ENCODE measurements at regions of chr19 and their contacts with region 1.

Region 1: DNA sequence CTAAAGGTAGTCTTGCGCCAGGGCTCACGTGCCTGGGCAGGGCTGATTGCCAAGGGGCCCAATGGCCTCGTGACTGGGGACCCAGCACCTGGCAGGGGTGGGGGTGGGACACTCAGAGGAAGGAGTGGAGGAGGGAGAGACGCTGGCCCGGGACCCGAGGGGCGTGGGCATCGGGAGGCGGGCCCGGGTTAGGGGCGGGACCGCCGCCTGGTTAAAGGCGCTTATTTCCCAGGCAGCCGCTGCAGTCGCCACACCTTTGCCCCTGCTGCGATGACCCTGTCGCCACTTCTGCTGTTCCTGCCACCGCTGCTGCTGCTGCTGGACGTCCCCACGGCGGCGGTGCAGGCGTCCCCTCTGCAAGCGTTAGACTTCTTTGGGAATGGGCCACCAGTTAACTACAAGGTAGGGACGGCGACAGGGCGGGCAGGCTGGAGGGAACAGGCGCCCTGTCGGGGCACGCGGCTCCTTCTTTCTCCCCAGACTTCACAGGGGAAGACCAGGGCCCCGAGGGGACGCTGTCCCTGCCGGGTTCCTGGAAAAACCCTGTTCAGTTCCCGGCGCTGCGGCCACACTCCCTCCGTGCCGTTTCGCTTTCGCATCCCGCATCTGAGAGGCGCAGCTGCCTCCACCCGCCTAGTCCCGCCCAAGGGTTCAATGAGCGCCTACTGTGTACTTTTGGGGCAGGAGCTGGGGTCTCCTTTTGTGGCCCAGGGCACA is at the start of gene IFI30:
- DNase-seq: peak; percentile 63 to 84
- H3K4me3 ChIP-seq: peak within 1 kb of the TSS; percentile 66
- H3K27ac ChIP-seq: peak within 1 kb of the TSS; percentile 11; the same call in 1 of the 2 replicates
- H3K4me1 ChIP-seq: peaks cover 15% of the 10 kb centered on the region
- H3K27me3 ChIP-seq: no peaks in the 10 kb centered on the region
- CTCF ChIP-seq: no peak
- total RNA-seq, gene IFI30: 26.1 and 35.8 TPM in 2 replicates

Region 2: DNA sequence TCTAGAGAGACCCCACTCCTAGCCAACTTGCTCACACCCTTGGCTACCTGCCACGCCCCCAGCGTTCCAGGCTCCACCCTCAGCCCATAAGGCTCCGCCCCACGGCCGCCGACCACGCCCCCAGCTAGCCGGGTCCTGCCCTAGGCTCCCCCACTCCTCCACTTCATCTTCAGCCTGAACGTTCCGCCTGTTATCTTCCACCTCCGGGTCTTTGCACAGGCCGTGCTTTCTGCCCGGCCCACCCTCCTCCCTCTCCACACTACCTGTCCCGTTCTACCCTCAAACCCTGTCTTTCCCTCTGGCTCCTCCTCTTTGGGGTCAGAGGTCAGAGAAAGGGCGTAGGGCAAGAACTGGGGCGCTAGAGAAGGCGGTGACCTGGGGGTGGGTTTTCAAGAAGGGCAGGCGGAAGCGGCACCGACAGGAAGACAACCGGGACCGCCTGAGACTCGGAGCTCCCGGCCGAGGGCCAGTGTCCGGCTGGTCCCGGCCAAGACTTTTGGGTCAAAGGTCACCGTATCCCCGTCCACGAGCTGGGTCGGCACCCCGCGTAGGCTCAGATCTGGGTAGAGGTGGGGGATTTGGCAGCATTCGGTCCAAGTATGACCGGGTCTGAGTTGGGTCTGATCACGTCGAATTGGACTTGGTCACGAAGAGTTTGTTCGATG is 50.3 kb after region 1 on chr19:
- CTCF ChIA-PET with region 1: no interaction called
- POLR2A ChIA-PET with region 1: no interaction called
- intact Hi-C with region 1: no loop called
- DNase-seq: peak; percentile 47 to 73
- H3K4me3 ChIP-seq: peak overlapping the region; percentile 63
- H3K27ac ChIP-seq: peak overlapping the region; percentile 40; the same call in 1 of the 2 replicates
- H3K4me1 ChIP-seq: 0 out of 2 replicates have a peak, but pooled peaks cover 3% of the 10 kb centered on the region
- H3K27me3 ChIP-seq: no peaks in the 10 kb centered on the region
- CTCF ChIP-seq: no peak

Region 3: DNA sequence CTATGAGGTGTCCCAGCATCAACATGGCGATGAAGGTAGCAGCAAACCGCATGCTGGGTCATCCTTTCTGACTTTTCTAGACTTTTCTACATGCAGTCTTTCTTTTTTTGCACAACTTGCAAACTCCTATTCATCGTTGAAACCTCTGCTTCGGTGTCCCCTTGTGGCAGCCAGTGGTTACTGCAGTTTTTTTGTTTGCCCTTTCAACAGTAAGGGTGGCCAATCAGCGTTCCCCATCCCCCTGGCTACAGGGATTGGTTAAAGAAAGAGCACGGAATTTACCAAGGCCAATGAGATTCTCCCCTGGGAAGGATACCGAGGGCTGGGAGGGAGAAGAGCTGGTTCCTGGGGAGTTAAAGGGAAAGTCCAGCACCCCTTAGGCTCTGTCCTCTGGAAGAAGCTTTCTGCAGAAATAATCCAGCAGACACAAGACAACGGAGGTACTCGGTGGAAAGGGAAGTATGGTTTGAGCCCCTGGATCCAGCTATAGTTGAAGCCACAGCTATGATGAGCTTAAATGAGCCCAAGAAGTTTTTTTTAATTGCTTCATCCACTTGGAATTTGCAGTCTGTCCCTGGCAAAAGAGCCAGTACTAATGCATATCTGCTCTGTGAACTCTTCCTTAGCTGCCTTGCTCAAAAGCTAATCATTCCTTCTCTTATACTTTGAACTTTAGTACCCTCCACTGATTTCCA is 154.8 kb after region 1 on chr19:
- CTCF ChIA-PET with region 1: no interaction called
- POLR2A ChIA-PET with region 1: no interaction called
- intact Hi-C with region 1: no loop called
- DNase-seq: peak; percentile 87 to 94
- H3K4me3 ChIP-seq: peak overlapping the region; percentile 51
- H3K27ac ChIP-seq: peak overlapping the region; percentile 39
- H3K4me1 ChIP-seq: peaks cover 36% of the 10 kb centered on the region
- H3K27me3 ChIP-seq: no peaks in the 10 kb centered on the region
- CTCF ChIP-seq: peak; percentile 96

Region 4: GRCh38 chr19:18551637-18552036 is 377.9 kb after region 1 on chr19:
- CTCF ChIA-PET with region 1: interaction called, 12 read pairs
- POLR2A ChIA-PET with region 1: no interaction called
- intact Hi-C with region 1: no loop called
- DNase-seq: no peak
- H3K4me3 ChIP-seq: no peak overlapping the region
- H3K27ac ChIP-seq: no peak overlapping the region
- H3K4me1 ChIP-seq: no peaks in the 10 kb centered on the region
- H3K27me3 ChIP-seq: no peaks in the 10 kb centered on the region
- CTCF ChIP-seq: no peak